Right ventricle myocardium inferior (tissue), 1 donor: ENCODE measurements at regions of chr1 and their contacts with region 1.

Region 1: DNA sequence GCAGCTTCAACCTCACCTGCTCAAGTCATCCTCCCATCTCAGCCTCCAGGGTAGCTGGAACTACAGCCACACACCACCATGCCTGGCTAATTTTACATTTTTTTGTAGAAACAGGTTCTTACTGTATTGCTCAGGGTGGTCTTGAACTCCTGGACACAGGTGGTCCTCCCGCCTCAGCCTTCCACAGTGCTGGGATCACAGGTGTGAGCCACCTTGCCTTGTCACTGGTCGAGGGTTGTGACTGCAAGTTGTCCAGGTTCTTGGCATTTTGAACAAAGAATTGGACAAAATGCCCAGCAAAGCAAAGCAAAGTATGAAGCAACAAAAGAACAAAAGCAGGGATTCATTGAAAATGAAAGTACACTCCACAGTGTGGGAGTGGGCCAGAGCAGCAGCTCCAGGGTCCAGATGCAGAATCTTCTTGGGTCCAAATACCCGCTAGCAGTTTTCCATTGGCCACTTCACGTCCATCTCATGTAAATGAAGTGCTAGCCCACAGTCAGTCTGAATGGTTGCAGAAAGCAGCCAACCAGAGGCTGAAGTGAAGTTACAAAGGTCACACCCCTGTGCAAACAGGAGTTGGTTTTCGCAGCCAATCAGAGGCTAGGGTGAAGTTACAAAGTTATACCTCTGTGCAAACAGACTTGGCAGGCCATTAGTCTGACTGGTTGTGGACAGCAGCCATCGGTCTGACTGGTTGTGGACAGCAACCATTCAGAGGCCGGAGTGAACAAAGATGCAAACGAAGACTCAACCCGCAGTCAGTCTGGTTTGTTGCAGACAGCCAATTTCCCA is 109.5 kb upstream of the KIF26B start:
- DNase-seq: no peak
- ATAC-seq: peak; percentile 56

Region 2: DNA sequence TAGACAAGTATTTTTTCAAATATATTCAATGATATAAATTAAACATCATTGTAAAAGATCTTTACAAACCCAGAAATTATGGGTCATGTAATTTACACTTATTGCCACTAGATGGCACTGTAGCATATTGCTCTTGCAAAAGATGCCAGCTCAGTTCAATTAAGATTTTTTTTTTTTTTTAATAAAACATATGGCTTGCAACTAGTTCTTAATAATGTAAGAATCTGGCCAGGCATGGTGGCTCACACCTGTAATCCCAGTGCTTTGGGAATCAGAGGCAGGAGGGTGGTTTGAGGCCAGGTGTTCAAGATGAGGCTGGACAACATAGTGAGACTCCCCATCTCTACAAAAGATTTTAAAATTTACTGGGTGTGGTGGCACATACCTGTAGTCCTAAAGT is 441.8 kb before region 1 on chr1:
- intact Hi-C with region 1: loop called (anchors 5 kb)
- DNase-seq: no peak
- ATAC-seq: no peak

Region 3: GRCh38 chr1:244796718-244797406 is 248.4 kb before region 1 on chr1:
- intact Hi-C with region 1: loop called (anchors 2 kb)
- DNase-seq: no peak
- ATAC-seq: no peak

Region 4: GRCh38 chr1:244835276-244836134 is 209.8 kb before region 1 on chr1 and contains the start of gene COX20:
- intact Hi-C with region 1: loop called (anchors 1 kb)
- DNase-seq: peak; percentile 96
- ATAC-seq: peak; percentile 92
- total RNA-seq, gene COX20: 58.4 TPM

Region 5: DNA sequence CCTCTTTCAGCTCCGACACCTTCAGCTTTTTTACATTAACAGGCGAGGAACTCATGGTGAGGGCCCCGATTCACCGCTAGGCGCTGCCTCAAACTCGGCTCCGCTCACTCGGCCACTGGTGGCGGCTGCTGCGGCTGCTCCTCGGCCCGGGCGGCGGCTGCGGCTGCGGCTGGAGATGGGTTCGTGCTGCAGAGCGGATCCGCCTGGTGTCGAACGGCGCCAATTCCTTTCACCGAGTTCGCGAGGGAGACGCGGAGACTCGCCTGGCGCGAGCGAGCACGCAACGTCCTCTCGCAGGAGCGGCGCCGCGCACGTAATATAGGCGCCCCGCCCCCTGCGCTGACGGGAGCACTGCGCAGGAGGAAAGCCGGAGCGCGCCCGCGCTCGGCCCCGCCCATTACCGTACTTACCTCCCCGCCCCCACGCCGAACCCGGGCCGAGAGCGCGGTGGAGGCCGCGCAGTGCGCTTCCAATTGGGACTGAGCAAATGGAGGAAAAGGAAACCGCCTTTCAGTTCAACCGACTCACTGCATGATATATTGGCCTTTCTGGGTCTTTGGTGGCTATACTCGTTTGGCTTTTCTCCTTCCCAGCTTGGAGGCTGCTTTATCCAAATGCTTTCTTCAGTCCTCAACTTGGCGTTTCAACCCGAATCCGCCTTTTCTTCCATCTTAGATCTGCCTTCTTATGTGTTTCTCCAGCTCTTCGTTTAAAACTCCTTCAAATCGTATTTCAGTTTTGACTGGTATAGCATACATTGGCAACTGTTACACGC is 180.8 kb before region 1 on chr1 and contains the start of gene HNRNPU:
- intact Hi-C with region 1: loop called (anchors 1 kb)
- DNase-seq: peak; percentile 99
- ATAC-seq: peak; percentile 94
- total RNA-seq, gene HNRNPU: 165 TPM

Region 6: DNA sequence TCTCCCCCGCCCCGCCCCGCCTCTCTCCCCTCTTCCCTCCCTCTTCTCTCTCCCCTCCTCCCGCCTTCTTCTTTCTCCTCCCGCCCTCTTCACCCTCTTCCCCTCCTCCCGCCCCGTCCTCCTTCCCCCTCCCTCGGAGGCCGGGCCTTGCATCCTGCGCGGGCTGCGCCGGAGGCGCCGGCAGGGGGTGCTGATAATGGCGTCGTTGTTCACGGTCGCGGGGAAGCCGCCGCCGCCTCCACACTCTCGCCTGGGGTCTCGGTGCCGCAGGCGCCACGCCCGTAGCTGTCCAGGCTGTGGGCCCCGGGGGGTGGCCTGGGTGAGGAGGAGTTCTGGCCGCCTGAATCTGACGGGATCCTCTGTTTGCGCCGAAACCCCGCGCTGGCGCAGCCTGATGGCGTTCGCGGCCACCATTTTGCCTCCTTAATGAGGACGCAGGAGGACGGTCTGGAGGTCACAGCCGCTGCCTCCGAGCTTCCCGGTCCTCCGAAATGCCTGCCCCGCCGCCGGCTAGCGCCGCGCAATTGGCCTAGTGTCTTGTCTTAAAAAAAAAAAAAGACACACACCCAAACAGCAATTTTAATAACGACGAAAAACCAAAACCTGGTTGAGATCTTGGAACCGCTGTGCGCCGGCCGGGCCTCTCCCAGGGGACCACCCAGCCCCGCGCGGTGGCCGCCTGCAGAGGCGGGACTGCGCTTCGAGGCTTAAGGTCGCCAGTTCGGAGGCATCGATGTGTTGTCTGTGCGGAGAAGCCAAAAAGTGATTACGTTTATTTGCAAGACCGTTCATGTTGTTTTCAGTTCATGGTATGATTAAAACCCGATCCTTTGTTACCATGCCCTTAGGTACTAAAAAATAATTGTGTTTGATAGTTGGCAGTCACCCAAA is 74.4 kb before region 1 on chr1:
- intact Hi-C with region 1: loop called (anchors 2 kb)
- DNase-seq: peak; percentile 97
- ATAC-seq: peak; percentile 91

Region 7: GRCh38 chr1:245322673-245323441 is 277.6 kb after region 1 on chr1:
- intact Hi-C with region 1: no loop called
- DNase-seq: no peak
- ATAC-seq: no peak

Region 8: GRCh38 chr1:245500546-245500945 is 455.3 kb after region 1 on chr1:
- intact Hi-C with region 1: no loop called
- DNase-seq: no peak
- ATAC-seq: no peak